ENCODE measurements at regions of chr6 and their contacts with region 1.

Region 1: DNA sequence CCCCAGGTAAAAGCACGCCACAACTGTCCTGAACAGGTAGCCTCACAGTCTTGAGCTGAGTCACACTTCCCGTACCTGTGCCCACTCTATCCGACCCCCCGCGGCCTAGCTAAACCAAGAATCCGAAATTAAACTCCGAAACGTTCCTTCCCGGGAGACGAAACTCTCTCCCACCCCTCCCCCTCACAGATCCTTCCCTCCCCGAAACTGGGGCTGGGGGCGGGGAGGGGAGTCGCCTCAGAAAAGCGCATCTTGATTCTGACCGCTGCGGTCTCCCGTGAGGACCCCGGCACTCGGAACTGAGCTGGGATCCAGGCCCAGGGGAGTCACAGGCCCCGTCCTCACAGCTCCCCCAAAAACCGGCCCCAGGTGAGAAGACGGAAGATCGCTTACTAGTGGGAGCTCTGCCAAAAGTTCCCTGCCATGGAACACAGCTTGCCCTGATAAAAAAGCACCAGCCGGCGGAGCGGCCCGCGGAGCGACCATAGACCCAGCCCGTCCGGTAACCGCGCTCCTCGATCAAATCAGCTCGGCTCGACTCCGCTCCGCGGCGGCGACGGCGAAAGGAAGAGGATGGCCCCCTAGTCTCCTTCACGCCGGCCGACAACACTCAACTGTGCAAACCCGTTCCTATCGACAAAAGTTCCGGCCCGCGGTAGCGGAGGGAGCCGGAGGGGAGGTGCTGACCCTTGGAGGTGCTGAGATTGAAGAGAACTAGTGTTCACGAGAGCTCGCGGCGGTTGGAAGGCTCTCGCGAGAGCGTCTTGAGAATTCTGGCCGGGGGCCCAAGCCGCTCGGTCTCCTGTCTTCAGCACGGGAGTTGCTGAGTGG is at the start of gene CCNC:
- DNase-seq: peak; percentile 94
- ATAC-seq: peak; percentile 99
- total RNA-seq, gene CCNC: 32.5 TPM

Region 2: DNA sequence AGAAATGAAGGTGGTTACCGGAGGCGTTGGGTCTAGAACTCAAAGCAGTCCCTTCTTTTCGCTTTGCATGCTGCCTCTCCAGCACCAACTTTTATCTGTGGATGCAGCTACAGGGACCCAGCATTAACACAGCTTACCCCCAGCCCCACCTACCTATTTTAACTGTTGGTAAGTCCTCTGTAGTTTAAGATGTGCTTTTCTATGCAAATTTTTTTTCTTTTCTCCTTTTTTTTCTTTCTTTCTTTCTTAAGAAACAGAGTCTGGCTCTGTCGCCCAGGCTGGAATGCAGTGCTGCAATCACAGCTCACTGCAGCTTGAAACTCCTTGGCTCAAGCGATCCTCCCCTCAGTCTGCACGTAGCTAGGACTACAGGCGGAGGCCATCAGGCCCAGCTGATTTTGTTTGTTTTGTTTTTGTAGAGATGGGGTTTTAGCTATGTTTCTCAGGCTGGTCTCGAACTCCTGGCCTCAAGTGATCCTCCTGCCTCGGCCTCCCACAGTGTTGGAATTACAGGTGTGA is 46.6 kb before region 1 on chr6:
- intact Hi-C with region 1: loop called (anchors 2 kb)
- DNase-seq: no peak
- ATAC-seq: peak; percentile 65

Region 3: DNA sequence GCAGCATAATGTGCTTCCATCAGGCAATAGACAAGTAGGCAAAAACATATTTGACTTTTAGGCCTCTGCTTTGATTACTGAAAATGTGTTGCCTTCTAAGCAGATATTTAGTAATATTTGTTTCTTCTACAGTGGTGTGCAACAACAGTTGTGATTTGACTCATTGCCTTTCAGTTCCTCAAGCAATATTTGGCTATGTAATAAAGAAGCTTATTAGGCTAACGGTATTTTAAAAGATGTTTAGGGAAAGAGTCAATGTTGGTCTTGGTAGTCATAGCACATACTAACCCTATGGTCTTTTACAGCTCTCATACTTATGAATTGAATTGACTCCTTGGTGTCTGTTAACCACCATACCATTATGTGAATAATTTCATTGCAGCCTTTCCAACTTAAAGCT is 1949.3 kb after region 1 on chr6:
- intact Hi-C with region 1: no loop called
- DNase-seq: no peak
- ATAC-seq: no peak